ENCODE measurements at regions of chr12 and their contacts with region 1.

Region 1: GRCh38 chr12:101823891-101824290 is 6.9 kb downstream of the GNPTAB start:
- DNase-seq: peak; percentile 75
- H3K4me3 Mint-ChIP-seq: peak overlapping the region; percentile 15
- H3K27ac Mint-ChIP-seq: peak overlapping the region; percentile 78
- H3K4me1 Mint-ChIP-seq: peaks cover 79% of the 10 kb centered on the region
- H3K27me3 Mint-ChIP-seq: no peaks in the 10 kb centered on the region

Region 2: GRCh38 chr12:101686176-101686575 is 137.7 kb before region 1 on chr12:
- CTCF ChIA-PET with region 1: no interaction called
- POLR2A ChIA-PET with region 1: no interaction called
- DNase-seq: no peak
- H3K4me3 Mint-ChIP-seq: no peak overlapping the region
- H3K27ac Mint-ChIP-seq: no peak overlapping the region
- H3K4me1 Mint-ChIP-seq: no peaks in the 10 kb centered on the region
- H3K27me3 Mint-ChIP-seq: peaks cover 13% of the 10 kb centered on the region

Region 3: GRCh38 chr12:101792051-101792931 is 31.6 kb before region 1 on chr12:
- CTCF ChIA-PET with region 1: interaction called, 114 read pairs
- POLR2A ChIA-PET with region 1: interaction called, 148 read pairs
- DNase-seq: no peak
- H3K4me3 Mint-ChIP-seq: no peak overlapping the region
- H3K27ac Mint-ChIP-seq: peak overlapping the region; percentile 24
- H3K4me1 Mint-ChIP-seq: peaks cover 57% of the 10 kb centered on the region
- H3K27me3 Mint-ChIP-seq: no peaks in the 10 kb centered on the region

Region 4: DNA sequence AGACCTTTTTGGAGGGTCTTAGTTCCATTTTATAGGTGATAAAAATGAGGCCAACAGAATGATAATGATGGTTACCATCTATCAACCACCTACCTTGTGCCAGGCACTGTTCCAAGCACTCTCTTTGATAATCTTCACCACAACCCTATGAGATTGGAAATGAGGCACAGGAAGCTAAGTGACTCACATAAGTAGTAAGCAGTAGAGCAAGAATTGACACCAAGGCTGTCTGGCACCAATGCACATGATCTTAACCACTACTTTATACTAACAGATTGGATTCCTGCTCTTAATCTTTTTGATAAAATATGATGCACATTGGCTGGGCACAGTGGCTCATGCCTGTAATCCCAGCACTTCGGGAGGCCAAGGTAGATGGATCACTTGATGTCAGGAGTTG is 144.9 kb after region 1 on chr12:
- CTCF ChIA-PET with region 1: no interaction called
- POLR2A ChIA-PET with region 1: no interaction called
- DNase-seq: no peak
- H3K4me3 Mint-ChIP-seq: no peak overlapping the region
- H3K27ac Mint-ChIP-seq: no peak overlapping the region
- H3K4me1 Mint-ChIP-seq: peaks cover 18% of the 10 kb centered on the region
- H3K27me3 Mint-ChIP-seq: peaks cover 12% of the 10 kb centered on the region

Measured in activated CD4-positive, alpha-beta memory T cell treated with anti-CD3 and anti-CD28 coated beads, Interleukin-2, amount 10 ng/mL, durations not matched to agents 7 days and 5 days (primary cell).